Colonic mucosa (tissue), 4 donors: ENCODE measurements at regions of chr1 and their contacts with region 1.

Region 1: GRCh38 chr1:178310685-178311105 is 186.1 kb downstream of the CLEC20A start:
- DNase-seq: no peak
- H3K4me3 ChIP-seq: no peak overlapping the region
- H3K27ac ChIP-seq: no peak overlapping the region
- H3K4me1 ChIP-seq: no peaks in the 10 kb centered on the region
- H3K27me3 ChIP-seq: no peaks in the 10 kb centered on the region
- CTCF ChIP-seq: peak; percentile 63

Region 2: GRCh38 chr1:178344513-178345082 is 33.9 kb after region 1 on chr1:
- intact Hi-C with region 1: loop called (anchors 5 kb)
- DNase-seq: peak; percentile 29
- H3K4me3 ChIP-seq: no peak overlapping the region
- H3K27ac ChIP-seq: no peak overlapping the region
- H3K4me1 ChIP-seq: peaks cover 3% of the 10 kb centered on the region
- H3K27me3 ChIP-seq: no peaks in the 10 kb centered on the region
- CTCF ChIP-seq: peak; percentile 46

Region 3: DNA sequence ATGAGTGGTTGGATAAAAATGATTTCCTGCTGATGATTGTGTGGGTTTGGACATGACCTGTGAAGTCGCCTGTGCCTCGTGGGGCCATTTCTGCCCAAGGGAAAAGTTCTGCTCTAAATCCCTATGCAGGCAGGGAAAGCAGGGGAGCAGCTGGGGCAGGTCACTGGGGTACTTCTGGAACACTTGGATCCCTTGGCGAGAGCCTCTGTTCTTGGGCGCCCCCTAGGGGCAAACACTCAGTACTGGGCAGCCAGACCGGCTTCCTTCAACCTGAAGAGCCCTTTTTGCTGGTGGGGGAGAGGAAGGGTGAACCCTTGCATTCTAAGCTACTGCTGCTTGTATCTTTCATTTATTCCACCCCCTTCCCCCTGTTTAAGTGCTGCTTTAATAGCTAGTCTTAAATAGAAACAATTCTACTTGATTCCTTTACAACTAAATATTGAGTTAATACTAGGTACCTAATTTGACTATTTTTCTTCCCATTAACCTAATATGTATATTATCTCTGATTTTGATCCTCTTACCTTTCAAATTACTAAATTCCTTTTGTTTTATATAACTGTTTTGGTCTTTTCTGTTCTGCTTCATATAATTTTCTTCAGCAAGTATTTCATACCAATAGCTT is 191.1 kb after region 1 on chr1:
- intact Hi-C with region 1: loop called (anchors 5 kb)
- DNase-seq: peak; percentile 79
- H3K4me3 ChIP-seq: no peak overlapping the region
- H3K27ac ChIP-seq: no peak overlapping the region
- H3K4me1 ChIP-seq: no peaks in the 10 kb centered on the region
- H3K27me3 ChIP-seq: no peaks in the 10 kb centered on the region
- CTCF ChIP-seq: peak; percentile 88

Region 4: DNA sequence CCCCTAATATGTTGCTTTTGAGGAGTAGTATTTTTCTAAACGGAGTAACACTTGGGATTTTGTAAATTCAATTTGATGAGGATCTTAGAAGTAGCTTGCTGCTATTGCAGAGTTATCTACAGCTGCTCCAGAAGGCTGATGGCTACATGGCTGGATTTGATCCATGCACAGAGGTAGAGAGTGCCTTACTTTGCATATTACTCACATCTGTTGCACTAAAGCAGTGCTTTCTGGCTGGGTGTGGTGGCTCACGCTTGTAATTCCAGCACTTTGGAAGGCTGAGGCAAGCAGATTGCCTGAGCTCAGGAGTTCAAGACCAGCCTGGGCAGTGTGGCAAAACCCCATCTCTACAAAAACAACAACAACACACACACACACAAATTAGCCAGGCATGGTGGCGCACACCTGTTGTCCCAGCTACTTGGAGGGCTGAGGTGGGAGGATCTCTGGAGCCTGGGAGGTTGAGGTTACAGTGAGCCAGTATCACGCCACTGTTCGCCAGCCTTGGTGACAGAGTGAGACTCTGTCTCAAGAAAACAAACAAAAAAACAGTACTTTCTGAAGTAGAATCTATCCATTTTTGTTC is 439.0 kb after region 1 on chr1:
- intact Hi-C with region 1: loop called (anchors 10 kb)
- DNase-seq: no peak
- H3K4me3 ChIP-seq: no peak overlapping the region
- H3K27ac ChIP-seq: no peak overlapping the region
- H3K4me1 ChIP-seq: no peaks in the 10 kb centered on the region
- H3K27me3 ChIP-seq: no peaks in the 10 kb centered on the region
- CTCF ChIP-seq: no peak